ENCODE measurements at regions of chr2 and their contacts with region 1.

Region 1: GRCh38 chr2:174350018-174350417 is 15.3 kb downstream of the SP9 start:
- DNase-seq: peak; percentile 37

Region 2: GRCh38 chr2:173402405-173402974 is 947.5 kb before region 1 on chr2:
- in situ Hi-C with region 1: loop called (anchors 10 kb)
- DNase-seq: peak; percentile 88

Measured in KBM-7 (cell line).